ENCODE measurements at regions of chr10 and their contacts with region 1.

Region 1: GRCh38 chr10:116287906-116288501 is 15.0 kb upstream of the GFRA1 start:
- DNase-seq: no peak
- H3K4me3 ChIP-seq: no peak overlapping the region
- H3K27ac ChIP-seq: no peak overlapping the region
- H3K4me1 ChIP-seq: no peaks in the 10 kb centered on the region
- H3K27me3 ChIP-seq: no peaks in the 10 kb centered on the region
- CTCF ChIP-seq: peak in 2 of 3 experiments; percentile 47 to 61; a peak in 2 of 4 replicates
- EP300 ChIP-seq: no peak
- POLR2A ChIP-seq: no peak
- RAD21 ChIP-seq: peak; percentile 85 to 86

Region 2: DNA sequence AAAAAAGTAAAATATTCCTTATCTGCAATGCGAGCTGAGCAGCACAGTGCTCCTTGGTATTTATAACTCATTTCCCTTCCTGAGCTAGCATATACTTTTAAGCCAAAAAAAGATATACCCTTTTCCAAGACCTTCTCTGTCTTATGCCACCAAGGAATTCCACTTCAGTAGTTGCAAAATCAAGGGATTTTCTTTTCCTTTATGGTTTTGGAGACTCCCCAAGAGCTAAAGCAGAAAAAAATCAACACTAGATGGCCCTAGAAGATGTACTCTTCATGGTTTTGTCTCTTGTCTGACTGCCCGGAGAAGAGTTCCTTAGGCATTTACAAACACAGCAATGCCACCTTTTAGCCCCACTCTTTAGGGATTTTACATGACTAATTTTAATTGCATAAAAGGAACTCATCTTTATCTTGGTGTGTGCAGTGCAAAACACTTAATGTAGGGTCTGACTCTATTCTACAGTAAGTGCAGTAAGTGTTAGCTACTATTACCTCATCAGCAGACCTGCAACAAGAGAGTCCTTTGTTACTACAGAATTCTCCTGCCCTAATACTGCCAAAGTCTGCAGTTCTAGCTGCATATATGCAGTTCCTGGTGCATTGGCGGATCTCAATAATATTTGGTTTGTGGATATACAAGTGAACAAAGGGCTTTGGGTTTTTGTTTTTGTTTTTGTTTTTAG is 458.3 kb before region 1 on chr10:
- CTCF ChIA-PET with region 1: interaction called, 12 read pairs
- POLR2A ChIA-PET with region 1: no interaction called
- DNase-seq: no peak
- H3K4me3 ChIP-seq: no peak overlapping the region
- H3K27ac ChIP-seq: no peak overlapping the region
- H3K4me1 ChIP-seq: no peaks in the 10 kb centered on the region
- H3K27me3 ChIP-seq: no peaks in the 10 kb centered on the region
- CTCF ChIP-seq: peak in 1 of 3 experiments; percentile 27; a peak in 2 of 4 replicates
- EP300 ChIP-seq: no peak
- POLR2A ChIP-seq: no peak
- RAD21 ChIP-seq: peak; percentile 48 to 53

Region 3: GRCh38 chr10:116120688-116121455 is 167.1 kb before region 1 on chr10:
- CTCF ChIA-PET with region 1: interaction called, 16 read pairs
- POLR2A ChIA-PET with region 1: no interaction called
- DNase-seq: peak; percentile 33 to 91
- H3K4me3 ChIP-seq: no peak overlapping the region
- H3K27ac ChIP-seq: no peak overlapping the region
- H3K4me1 ChIP-seq: peaks cover 0 to 10% (median 3%) of the 10 kb centered on the region in 4 experiments; a peak in 3 of 7 replicates
- H3K27me3 ChIP-seq: peaks cover 0 to 7% (median 4%) of the 10 kb centered on the region in 4 experiments; a peak in 4 of 7 replicates
- CTCF ChIP-seq: peak; percentile 84 to 91 (median 87)
- EP300 ChIP-seq: no peak
- POLR2A ChIP-seq: no peak
- RAD21 ChIP-seq: peak; percentile 85 to 87

Region 4: DNA sequence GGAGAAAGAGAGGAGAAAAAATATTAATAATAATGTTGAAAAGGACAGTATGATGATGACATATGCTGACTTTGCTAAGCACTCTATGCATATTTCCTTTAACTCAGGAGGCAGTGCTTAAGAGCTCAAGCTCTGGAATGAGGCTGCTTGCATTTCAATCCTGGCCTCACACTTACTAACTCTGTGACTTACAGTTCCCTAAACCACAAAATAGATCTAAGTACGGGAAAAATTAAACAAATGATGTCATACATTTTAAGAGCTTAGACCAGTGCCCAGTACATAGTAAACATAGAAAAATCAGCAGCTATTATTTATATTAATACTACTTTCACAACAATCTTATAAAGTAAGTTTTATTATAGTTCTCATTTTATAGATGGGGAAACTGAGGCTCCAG is 76.3 kb before region 1 on chr10:
- CTCF ChIA-PET with region 1: no interaction called
- POLR2A ChIA-PET with region 1: no interaction called
- DNase-seq: no peak
- H3K4me3 ChIP-seq: no peak overlapping the region
- H3K27ac ChIP-seq: no peak overlapping the region
- H3K4me1 ChIP-seq: no peaks in the 10 kb centered on the region
- H3K27me3 ChIP-seq: no peaks in the 10 kb centered on the region
- CTCF ChIP-seq: no peak
- EP300 ChIP-seq: no peak
- POLR2A ChIP-seq: no peak
- RAD21 ChIP-seq: no peak

Region 5: DNA sequence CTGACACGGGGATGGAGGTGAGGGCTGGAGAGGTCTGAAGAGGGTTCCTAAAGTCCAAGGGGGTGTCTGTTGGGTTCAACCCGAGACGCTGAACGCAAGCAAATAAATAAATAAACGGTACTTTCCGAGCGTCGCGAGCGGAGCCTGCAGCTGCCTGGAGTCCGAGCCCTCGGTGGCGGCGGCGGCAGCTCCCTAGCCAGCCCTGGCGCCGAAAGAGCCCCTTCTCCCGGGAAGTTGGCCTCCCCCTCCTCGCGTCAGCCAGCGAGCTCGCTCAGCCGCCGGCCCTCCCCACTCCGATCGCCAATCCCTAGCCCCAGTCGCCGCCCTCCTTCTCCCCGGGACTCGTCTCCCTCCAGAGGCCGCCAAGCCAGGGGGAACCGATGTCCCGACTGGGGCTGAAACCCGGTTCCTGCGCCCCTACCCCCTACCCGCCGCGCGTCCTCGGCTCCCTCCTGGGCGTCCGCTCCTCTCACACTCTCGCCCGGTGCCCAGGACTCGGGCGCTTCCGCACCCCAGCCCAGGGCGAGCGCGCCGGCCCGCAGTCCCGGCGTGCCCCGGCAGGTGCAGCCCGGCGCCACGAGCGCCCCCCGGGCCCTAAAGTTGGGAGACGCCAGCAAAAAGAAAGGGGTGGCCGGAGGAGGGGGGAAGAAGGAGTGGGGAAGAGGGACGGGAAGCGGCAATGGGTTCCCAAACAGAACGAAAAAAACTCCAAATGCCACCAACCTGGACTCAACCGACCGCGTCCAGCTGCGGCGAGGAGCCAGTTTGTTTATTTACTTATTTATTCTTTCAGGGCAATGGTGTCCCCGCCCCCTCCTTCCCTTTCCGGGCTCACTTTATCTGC is 15.3 kb before region 1 on chr10 and contains the start of gene GFRA1:
- CTCF ChIA-PET with region 1: interaction called, 11 read pairs
- POLR2A ChIA-PET with region 1: no interaction called
- DNase-seq: peak in 1 of 2 experiments; percentile 82
- H3K4me3 ChIP-seq: peak within 1 kb of the TSS; percentile 45 to 77 (median 70)
- H3K27ac ChIP-seq: no peak within 1 kb of the TSS
- H3K4me1 ChIP-seq: peaks cover 0 to 7% (median 3%) of the 10 kb centered on the region in 4 experiments; a peak in 5 of 7 replicates
- H3K27me3 ChIP-seq: peaks cover 42 to 79% (median 74%) of the 10 kb centered on the region in 4 experiments
- CTCF ChIP-seq: peak in 1 of 3 experiments; percentile 18; a peak in 1 of 4 replicates
- EP300 ChIP-seq: no peak
- POLR2A ChIP-seq: no peak
- RAD21 ChIP-seq: no peak; a peak in 1 of 4 replicates
- total RNA-seq, gene GFRA1: 2.0 TPM in 2 replicates

Region 6: GRCh38 chr10:116465546-116465945 is 177.5 kb after region 1 on chr10:
- CTCF ChIA-PET with region 1: no interaction called
- POLR2A ChIA-PET with region 1: no interaction called
- DNase-seq: no peak
- H3K4me3 ChIP-seq: no peak overlapping the region
- H3K27ac ChIP-seq: no peak overlapping the region
- H3K4me1 ChIP-seq: no peaks in the 10 kb centered on the region; a peak in 1 of 7 replicates
- H3K27me3 ChIP-seq: no peaks in the 10 kb centered on the region
- CTCF ChIP-seq: no peak
- EP300 ChIP-seq: no peak
- POLR2A ChIP-seq: no peak
- RAD21 ChIP-seq: no peak

Region 7: GRCh38 chr10:116487522-116488430 is 199.8 kb after region 1 on chr10:
- CTCF ChIA-PET with region 1: no interaction called
- POLR2A ChIA-PET with region 1: no interaction called
- DNase-seq: no peak
- H3K4me3 ChIP-seq: no peak overlapping the region
- H3K27ac ChIP-seq: no peak overlapping the region
- H3K4me1 ChIP-seq: peaks cover 0 to 3% (median 0%) of the 10 kb centered on the region in 4 experiments; a peak in 2 of 7 replicates
- H3K27me3 ChIP-seq: no peaks in the 10 kb centered on the region
- CTCF ChIP-seq: no peak
- EP300 ChIP-seq: no peak
- POLR2A ChIP-seq: no peak
- RAD21 ChIP-seq: no peak